Right ventricle myocardium inferior (tissue), 1 donor: ENCODE measurements at regions of chr5 and their contacts with region 1.

Region 1: GRCh38 chr5:54867310-54867944 is 118.0 kb downstream of the ESM1 start:
- DNase-seq: no peak
- ATAC-seq: no peak

Region 2: DNA sequence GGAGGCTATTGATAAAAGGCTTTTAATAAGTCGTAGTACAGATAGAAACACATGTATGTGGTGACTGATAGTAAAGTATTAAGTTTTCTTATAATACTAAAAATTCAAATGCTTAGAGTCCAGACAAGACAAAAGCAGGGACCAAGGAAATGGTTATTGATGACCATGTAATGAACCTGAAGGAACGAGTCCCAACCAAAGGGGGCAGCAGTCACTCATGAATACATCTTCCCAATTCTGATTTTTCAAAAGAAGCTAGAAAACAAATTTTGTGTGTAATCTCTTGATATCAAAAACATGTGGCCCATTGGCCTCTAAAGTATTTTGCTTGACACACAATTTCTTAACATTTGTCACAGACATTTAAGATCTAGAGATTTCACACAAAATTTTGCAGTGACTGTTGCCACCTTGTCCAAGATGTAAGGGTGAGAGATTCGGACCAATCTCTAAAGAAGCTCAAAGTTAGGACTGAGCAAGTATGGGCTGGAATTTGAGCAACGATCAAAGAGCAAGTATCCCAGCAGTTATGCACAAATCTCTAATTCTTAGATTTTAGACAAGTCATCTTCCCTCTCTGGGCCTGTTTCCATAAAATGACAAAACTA is 623.9 kb before region 1 on chr5:
- intact Hi-C with region 1: loop called (anchors 10 kb)
- DNase-seq: no peak
- ATAC-seq: no peak

Region 3: GRCh38 chr5:54844905-54845566 is 22.4 kb before region 1 on chr5:
- intact Hi-C with region 1: loop called (anchors 2 kb)
- DNase-seq: no peak
- ATAC-seq: no peak

Region 4: GRCh38 chr5:55037046-55037771 is 169.8 kb after region 1 on chr5:
- intact Hi-C with region 1: no loop called
- DNase-seq: no peak
- ATAC-seq: no peak